Activated CD4-positive, alpha-beta T cell treated with anti-CD3 and anti-CD28 coated beads for 36 hours (primary cell): ENCODE measurements at regions of chr14 and their contacts with region 1.

Region 1: DNA sequence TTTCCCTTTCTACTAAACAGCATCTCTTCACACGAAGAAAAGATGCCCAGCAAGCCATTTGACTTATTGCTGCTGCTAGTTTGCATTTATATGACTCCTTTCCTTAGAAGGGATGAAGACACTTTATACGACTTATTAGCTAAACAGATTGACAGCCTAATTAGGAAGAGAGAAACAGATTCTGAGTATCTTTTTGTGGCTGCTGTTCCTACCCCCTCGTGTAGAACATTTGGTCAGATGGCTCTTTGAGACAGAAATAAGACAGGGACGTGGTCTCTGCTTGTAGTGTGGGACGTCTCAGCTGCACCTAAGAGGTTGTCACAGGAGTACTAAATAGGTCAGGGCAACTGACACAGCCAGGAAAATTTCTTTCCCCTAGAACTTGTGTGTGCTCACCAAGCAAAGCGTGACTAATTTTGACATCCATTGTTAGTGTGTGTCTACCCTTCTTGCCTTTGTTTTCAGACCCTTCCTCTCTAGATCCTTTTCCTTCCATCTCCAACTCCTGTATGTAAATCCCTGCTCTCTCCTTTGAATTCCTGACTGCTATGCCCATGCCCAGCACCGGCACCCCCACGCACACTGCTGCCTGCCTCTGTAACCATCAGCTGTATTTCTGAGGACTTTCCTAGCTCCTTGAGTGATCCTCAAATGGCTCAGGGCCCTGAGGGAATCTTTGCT is 83.2 kb downstream of the DAD1 start:
- DNase-seq: peak; percentile 51
- ATAC-seq: peak; percentile 34
- H3K4me3 Mint-ChIP-seq: peak overlapping the region; percentile 84
- H3K27ac Mint-ChIP-seq: peak overlapping the region; percentile 98
- H3K4me1 Mint-ChIP-seq: peaks cover 33% of the 10 kb centered on the region
- H3K27me3 Mint-ChIP-seq: no peaks in the 10 kb centered on the region

Region 2: GRCh38 chr14:21846227-21846885 is 659.5 kb before region 1 on chr14:
- CTCF ChIA-PET with region 1: no interaction called
- POLR2A ChIA-PET with region 1: interaction called, 4 read pairs
- intact Hi-C with region 1: loop called in 1 of 2 experiments (anchors 5 kb)
- DNase-seq: peak; percentile 86
- ATAC-seq: peak; percentile 81
- H3K4me3 Mint-ChIP-seq: peak overlapping the region; percentile 84
- H3K27ac Mint-ChIP-seq: peak overlapping the region; percentile 87
- H3K4me1 Mint-ChIP-seq: peaks cover 12% of the 10 kb centered on the region
- H3K27me3 Mint-ChIP-seq: peaks cover 13% of the 10 kb centered on the region

Region 3: GRCh38 chr14:22002860-22003309 is 503.0 kb before region 1 on chr14:
- CTCF ChIA-PET with region 1: interaction called, 4 read pairs
- POLR2A ChIA-PET with region 1: interaction called, 8 read pairs
- intact Hi-C with region 1: loop called in 1 of 2 experiments (anchors 2 kb)
- DNase-seq: peak; percentile 87
- ATAC-seq: peak; percentile 80
- H3K4me3 Mint-ChIP-seq: peak overlapping the region; percentile 80
- H3K27ac Mint-ChIP-seq: peak overlapping the region; percentile 83
- H3K4me1 Mint-ChIP-seq: peaks cover 26% of the 10 kb centered on the region
- H3K27me3 Mint-ChIP-seq: no peaks in the 10 kb centered on the region

Region 4: DNA sequence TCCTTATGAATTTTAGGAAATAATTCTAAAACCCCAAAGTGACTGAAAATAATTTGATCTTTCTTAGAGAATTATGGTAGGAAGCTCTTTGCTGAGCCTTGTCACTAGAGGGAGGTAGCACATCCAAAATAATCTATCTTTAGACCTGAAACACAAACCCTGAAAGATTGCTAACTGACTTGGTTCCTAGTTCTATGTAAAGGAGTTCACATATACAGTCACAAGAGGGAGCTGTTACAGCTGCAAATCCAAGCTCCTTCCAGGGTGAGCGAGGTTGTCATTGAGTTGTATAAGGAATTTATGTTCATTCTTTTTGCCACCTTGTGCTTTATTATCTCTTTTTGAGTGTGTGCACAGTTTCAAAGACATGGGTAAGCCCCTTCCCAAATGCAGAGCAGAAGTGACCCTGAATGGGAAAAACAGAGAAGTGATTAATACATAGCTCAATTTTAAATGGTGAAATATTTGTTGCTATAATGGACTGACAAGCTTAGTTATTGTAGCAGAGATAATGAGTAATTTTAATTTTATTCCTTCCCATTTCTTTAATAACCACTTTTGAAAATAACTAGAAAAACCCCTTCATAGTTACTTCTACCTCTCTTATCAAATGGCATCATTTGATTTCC is 304.7 kb before region 1 on chr14:
- CTCF ChIA-PET with region 1: no interaction called
- POLR2A ChIA-PET with region 1: no interaction called
- intact Hi-C with region 1: loop called in 1 of 2 experiments (anchors 5 kb)
- DNase-seq: no peak
- ATAC-seq: peak; percentile 73
- H3K4me3 Mint-ChIP-seq: no peak overlapping the region
- H3K27ac Mint-ChIP-seq: no peak overlapping the region
- H3K4me1 Mint-ChIP-seq: peaks cover 15% of the 10 kb centered on the region
- H3K27me3 Mint-ChIP-seq: no peaks in the 10 kb centered on the region

Region 5: DNA sequence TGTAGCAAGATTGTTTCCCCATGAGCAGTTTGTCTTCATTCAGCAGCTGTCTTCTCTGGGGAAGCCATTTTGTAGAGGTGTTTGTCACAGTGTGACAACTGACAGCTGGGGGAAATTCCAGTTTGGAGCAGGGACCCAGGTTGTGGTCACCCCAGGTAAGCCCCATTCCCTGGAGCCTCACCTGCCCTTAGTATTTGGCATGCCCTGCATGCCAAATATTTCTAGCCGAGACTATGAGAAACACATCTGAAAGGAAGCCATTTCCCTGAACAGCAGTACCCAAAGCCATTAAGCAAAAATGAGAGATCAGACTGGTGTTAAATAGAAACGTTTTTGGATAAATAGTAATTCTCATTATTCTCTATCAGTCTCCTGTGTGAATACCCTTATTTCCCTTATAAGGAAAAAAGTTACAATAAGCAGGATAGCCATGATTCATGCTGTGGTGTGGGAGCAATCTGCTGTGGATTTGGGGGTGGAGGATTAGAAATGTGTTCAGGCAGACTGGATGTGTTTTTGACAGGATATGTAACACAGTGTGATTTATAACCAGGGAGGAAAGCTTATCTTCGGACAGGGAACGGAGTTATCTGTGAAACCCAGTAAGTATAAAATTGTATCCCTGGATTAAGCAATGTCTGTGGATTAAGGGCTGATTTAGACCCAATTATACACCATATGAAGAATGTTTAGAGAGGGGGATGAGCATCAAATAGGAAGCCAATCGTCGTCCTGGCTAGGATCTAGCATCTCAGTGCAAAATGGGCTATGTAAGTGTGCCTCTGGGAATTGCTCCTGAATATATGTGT is 14.2 kb after region 1 on chr14:
- CTCF ChIA-PET with region 1: interaction called, 18 read pairs
- POLR2A ChIA-PET with region 1: interaction called, 10 read pairs
- intact Hi-C with region 1: loop called in 1 of 2 experiments (anchors 1 kb)
- DNase-seq: no peak
- ATAC-seq: peak; percentile 14
- H3K4me3 Mint-ChIP-seq: peak overlapping the region; percentile 84
- H3K27ac Mint-ChIP-seq: peak overlapping the region; percentile 97
- H3K4me1 Mint-ChIP-seq: peaks cover 87% of the 10 kb centered on the region
- H3K27me3 Mint-ChIP-seq: no peaks in the 10 kb centered on the region

Region 6: GRCh38 chr14:22549981-22550673 is 44.3 kb after region 1 on chr14:
- CTCF ChIA-PET with region 1: interaction called, 25 read pairs
- POLR2A ChIA-PET with region 1: interaction called, 34 read pairs
- intact Hi-C with region 1: no loop called
- DNase-seq: peak; percentile 84
- ATAC-seq: peak; percentile 63
- H3K4me3 Mint-ChIP-seq: peak overlapping the region; percentile 71
- H3K27ac Mint-ChIP-seq: peak overlapping the region; percentile 99
- H3K4me1 Mint-ChIP-seq: peaks cover 94% of the 10 kb centered on the region
- H3K27me3 Mint-ChIP-seq: no peaks in the 10 kb centered on the region